Mucosa of descending colon (tissue), 3 donors: ENCODE measurements at regions of chr6 and their contacts with region 1.

Region 1: DNA sequence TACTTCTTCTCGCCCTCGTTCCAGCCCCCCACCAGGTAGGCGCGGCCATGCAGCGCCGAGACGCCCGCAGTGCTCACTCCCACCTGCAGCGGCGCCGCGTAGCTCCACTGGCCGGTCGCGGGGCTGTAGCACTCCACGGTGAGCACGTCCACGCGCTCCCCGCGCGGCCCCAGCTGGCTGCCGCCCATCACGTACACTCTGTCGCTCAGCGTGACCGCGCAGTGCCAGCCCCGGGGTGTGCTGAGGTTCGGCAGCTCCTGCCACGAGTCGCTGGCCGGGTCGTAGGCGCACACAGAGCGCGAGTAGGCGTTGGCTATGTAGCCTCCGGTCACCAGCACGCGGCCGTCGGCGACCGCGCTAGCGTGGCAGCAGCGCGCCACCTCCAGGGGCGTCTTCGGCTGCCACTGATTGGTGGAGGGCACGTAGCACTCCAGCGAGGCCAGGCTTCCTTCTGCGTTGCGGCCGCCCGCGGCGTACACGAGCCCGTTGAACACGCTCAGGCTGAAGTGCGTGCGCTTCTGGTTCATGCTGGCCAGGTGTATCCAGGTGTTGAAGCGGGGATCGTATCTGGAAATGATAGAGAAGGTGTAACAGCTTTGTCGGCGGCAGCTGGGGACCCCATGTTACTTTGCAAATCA is 13.7 kb downstream of the KLHL31 start:
- DNase-seq: peak; percentile 85 to 92 (median 92)
- ATAC-seq: peak; percentile 98
- H3K4me3 ChIP-seq: peak overlapping the region; percentile 37
- H3K4me1 ChIP-seq: peaks cover 7% of the 10 kb centered on the region
- CTCF ChIP-seq: peak; percentile 11

Region 2: DNA sequence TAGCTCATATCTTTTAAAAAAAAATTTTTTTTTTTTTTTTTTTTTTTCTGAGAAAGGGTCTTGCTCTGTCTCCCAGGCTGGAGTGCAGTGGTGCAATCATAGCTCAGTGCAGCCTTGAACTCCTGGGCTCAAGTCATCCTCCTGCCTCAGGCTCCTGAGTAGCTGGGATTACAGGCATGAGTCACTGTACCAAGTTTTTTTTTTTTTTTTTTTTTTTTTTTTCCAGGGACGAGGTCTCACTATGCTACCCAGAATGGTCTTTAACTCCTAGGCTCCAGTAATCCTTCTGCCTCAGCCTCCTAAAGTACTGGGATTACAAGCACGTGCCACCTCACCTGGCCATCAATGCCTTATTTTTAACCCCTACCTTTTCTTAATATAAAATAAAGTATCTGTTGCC is 134.8 kb before region 1 on chr6:
- intact Hi-C with region 1: loop called in 1 of 2 experiments (anchors 10 kb)
- DNase-seq: no peak
- ATAC-seq: no peak
- H3K4me3 ChIP-seq: no peak overlapping the region
- H3K4me1 ChIP-seq: peaks cover 8% of the 10 kb centered on the region
- CTCF ChIP-seq: no peak

Region 3: GRCh38 chr6:53544470-53545308 is 107.2 kb before region 1 on chr6 and contains the start of gene GCLC:
- intact Hi-C with region 1: loop called in 1 of 2 experiments (anchors 5 kb)
- DNase-seq: peak; percentile 95 to 96 (median 95)
- ATAC-seq: peak; percentile 82
- H3K4me3 ChIP-seq: peak within 1 kb of the TSS; percentile 70
- H3K4me1 ChIP-seq: peaks cover 17% of the 10 kb centered on the region
- CTCF ChIP-seq: peak; percentile 75
- total RNA-seq, gene GCLC: 33.1 to 67.3 (median 40.5) TPM